AG04450 (cell line): ENCODE measurements at regions of chr7 and their contacts with region 1.

Region 1: DNA sequence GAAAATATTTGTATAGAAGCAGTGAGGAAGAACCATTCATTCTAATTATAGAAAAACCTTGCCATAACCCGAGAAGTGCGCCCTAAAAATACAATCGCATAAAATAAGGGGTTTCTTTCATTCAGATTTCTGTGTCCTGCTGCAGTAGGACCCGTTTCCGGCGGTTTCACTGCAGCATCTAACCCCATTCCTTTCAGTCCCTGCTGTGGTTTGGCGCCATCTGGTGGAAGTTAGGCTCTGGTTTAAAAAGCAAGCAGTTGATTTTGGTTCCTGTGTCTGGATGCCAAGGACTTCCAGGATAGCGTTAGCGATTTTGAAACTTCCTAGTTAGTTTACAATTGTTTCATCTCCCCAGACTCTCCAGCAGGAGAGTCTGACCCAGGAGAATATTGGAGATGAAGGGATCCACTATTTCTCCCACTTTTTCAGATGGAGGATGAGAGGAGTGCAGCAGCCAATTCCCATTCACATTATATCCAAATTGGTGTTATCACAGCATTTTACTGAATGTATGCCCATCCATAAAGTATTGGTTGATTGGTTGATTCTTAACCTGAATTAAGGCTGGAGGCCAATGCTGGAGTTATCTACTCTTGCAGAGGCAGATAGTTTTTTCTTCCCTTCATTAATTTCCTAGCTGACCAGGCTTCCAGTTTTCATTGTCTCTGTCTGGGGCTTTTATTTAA is 128.8 kb upstream of the CACNA2D1 start:
- DNase-seq: peak; percentile 73
- H3K4me3 ChIP-seq: no peak overlapping the region
- H3K27ac ChIP-seq: no peak overlapping the region
- H3K27me3 ChIP-seq: no peaks in the 10 kb centered on the region
- CTCF ChIP-seq: peak; percentile 99

Region 2: DNA sequence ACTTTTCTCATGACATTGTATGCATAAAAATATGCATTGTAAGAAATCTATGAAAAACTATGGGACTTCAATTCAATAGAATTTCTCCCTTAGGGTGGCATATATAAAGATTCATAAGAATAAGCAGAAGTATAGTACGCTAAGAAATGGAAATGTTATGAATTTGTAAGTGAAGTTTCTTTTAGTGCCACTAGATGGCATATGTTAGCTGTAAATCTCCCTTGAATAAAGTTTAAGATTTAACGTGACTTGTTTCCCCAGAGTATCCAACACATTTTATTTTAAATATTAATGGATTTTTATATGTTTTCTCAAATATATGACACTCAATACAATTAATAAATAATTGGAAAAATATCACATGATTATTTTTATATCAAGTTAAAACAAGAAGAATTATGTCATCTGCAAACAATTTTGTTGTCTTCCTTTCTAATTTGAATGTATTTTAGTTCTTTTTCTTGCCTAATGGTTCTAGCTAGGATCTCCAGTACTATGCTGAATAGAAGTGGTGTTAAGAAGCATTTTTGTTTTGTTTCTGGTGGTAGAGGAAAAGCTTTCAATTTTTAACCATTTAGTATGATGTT is 1089.6 kb before region 1 on chr7:
- CTCF ChIA-PET with region 1: interaction called, 13 read pairs
- POLR2A ChIA-PET with region 1: no interaction called
- DNase-seq: no peak
- H3K4me3 ChIP-seq: no peak overlapping the region
- H3K27ac ChIP-seq: no peak overlapping the region
- H3K27me3 ChIP-seq: no peaks in the 10 kb centered on the region
- CTCF ChIP-seq: peak; percentile 56

Region 3: DNA sequence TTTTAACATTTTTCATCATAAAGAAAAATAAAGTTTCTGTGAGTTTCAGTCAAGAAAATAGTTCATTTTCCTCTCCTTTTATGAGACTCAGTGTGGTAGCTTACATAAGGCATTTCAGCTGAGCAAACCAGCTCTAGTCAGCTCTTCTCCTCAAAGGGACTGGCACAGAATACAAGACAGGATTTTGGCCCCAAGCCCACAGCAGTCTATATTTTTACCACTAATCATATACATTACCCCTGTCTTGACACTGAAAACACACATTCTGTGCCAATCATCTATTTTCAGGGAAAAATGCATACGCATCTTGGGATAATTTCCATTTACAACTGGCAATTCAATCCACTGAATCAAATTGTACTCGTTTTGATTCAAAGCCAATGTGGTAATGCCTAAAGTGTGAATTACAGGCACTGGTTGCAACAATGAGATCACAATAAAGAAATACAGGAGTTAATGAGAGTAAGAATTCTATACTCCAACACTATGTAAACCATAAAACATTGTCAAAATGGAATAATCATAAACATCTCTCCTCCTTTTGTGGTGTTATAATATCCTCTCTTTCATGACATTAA is 315.1 kb before region 1 on chr7:
- CTCF ChIA-PET with region 1: no interaction called
- POLR2A ChIA-PET with region 1: no interaction called
- DNase-seq: no peak
- H3K4me3 ChIP-seq: no peak overlapping the region
- H3K27ac ChIP-seq: no peak overlapping the region
- H3K27me3 ChIP-seq: no peaks in the 10 kb centered on the region
- CTCF ChIP-seq: no peak

Region 4: DNA sequence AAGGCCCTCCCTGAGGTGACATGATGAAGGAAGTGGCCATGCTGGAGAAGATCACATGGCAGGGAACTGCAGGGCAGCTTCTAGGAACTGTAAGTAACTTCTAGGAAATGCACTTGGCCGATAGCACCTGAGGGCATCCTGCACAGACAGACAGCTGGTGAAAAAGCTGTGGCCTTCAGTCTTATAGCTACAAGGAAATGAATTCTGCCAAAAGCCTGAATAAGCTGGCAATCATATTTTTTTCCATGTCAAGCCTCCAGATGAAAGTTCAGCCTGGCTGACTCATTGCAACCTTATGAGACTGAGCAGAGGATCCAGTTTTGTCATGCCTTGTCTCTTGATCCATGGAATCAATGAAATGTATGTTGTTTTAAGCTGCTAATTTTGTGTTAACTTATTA is 37.7 kb before region 1 on chr7:
- CTCF ChIA-PET with region 1: no interaction called
- POLR2A ChIA-PET with region 1: no interaction called
- DNase-seq: no peak
- H3K4me3 ChIP-seq: no peak overlapping the region
- H3K27ac ChIP-seq: no peak overlapping the region
- H3K27me3 ChIP-seq: no peaks in the 10 kb centered on the region
- CTCF ChIP-seq: no peak

Region 5: GRCh38 chr7:82559193-82559805 is 13.0 kb before region 1 on chr7:
- CTCF ChIA-PET with region 1: interaction called, 11 read pairs
- POLR2A ChIA-PET with region 1: no interaction called
- DNase-seq: no peak
- H3K4me3 ChIP-seq: no peak overlapping the region
- H3K27ac ChIP-seq: no peak overlapping the region
- H3K27me3 ChIP-seq: no peaks in the 10 kb centered on the region
- CTCF ChIP-seq: no peak